HepG2 (cell line): ENCODE measurements at regions of chr1 and their contacts with region 1.

Region 1: GRCh38 chr1:38026592-38027200 is 14.2 kb downstream of the UTP11 start:
- DNase-seq: no peak
- ATAC-seq: peak; percentile 48
- H3K4me3 ChIP-seq: no peak overlapping the region
- H3K27ac ChIP-seq: no peak overlapping the region
- H3K4me1 ChIP-seq: peaks cover 22% of the 10 kb centered on the region
- H3K27me3 ChIP-seq: no peaks in the 10 kb centered on the region
- CTCF ChIP-seq: peak; percentile 81
- EP300 ChIP-seq: no peak
- POLR2A ChIP-seq: no peak
- RAD21 ChIP-seq: peak; percentile 51; the same call in 1 of the 2 replicates

Region 2: DNA sequence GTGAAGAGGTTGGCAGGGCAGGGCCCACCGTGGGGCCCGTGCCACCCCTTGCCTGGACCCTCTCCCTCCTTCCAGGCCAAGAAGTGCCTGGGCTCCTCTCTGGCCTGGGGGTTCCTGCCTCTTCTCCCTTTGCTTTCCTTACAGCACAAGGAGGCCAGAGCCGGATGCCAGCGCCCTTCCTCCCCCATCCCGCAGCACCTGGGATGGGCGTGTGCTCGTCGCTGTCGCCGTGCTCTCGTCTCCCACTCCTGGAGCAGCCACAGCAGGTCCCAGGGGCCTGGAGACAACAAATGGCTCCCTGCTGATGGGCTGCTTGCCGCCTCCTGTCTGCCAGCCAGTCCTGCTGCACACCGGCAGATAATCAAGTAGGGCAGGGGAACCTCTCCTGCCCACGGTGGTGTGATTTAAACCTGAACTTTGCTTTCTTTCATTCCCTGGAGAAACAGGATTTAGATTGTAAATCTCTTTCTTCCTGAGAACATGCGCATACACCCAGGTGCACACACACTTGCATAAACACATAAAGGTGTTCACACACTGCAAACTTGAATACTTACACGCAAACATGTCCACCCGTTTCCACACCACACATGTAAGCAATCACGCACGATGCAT is 70.7 kb after region 1 on chr1:
- CTCF ChIA-PET with region 1: no interaction called
- POLR2A ChIA-PET with region 1: no interaction called
- in situ Hi-C with region 1: no loop called
- intact Hi-C with region 1: no loop called
- DNase-seq: no peak
- ATAC-seq: no peak
- H3K4me3 ChIP-seq: no peak overlapping the region
- H3K27ac ChIP-seq: no peak overlapping the region
- H3K4me1 ChIP-seq: peaks cover 14% of the 10 kb centered on the region
- H3K27me3 ChIP-seq: no peaks in the 10 kb centered on the region
- CTCF ChIP-seq: no peak
- EP300 ChIP-seq: no peak
- POLR2A ChIP-seq: no peak
- RAD21 ChIP-seq: no peak

Region 3: DNA sequence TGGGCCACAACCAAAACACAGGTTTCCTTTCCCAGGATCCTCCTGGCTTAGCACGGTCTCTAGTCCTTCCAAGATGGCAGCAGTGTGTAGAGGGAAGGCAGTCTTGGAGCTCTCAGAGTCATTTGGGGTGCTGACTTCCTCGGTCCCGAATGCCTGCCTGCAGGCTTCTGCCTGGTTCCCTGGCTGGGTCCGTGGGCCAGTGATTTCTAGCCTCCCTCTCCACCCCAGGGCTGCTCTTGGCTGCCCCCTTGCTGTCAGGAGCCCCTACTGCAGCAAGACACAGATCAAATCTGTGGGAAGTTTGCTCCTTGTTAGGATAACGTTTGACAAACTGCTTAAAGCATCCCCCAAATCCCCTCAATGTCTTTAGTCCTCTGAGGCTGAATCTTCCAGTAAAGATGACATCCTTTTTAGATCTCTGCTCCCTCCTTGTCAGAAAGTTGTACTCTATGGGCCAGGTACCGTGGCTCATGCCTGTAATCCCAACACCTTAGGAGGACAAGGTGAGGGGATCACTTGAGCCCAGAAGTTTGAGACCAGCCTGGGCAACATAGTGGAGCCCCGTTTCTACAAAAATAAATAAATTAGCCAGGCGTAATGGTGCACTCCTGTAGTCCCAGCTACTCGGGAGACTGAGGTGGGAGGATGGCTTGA is 560.4 kb after region 1 on chr1:
- CTCF ChIA-PET with region 1: interaction called, 4 read pairs
- POLR2A ChIA-PET with region 1: no interaction called
- in situ Hi-C with region 1: loop called (anchors 10 kb)
- intact Hi-C with region 1: no loop called
- DNase-seq: peak; percentile 26
- ATAC-seq: peak; percentile 80
- H3K4me3 ChIP-seq: no peak overlapping the region
- H3K27ac ChIP-seq: no peak overlapping the region
- H3K4me1 ChIP-seq: no peaks in the 10 kb centered on the region
- H3K27me3 ChIP-seq: no peaks in the 10 kb centered on the region; a peak in 1 of 5 replicates
- CTCF ChIP-seq: peak; percentile 86
- EP300 ChIP-seq: no peak
- POLR2A ChIP-seq: no peak
- RAD21 ChIP-seq: peak; percentile 54; the same call in 1 of the 2 replicates